CD14-positive monocyte (primary cell): ENCODE measurements at regions of chr1 and their contacts with region 1.

Region 1: GRCh38 chr1:31541194-31541593 is 35.1 kb upstream of the TINAGL1 start:
- DNase-seq: no peak
- H3K4me3 ChIP-seq: no peak overlapping the region
- H3K4me3 Mint-ChIP-seq: no peak overlapping the region
- H3K27ac ChIP-seq: no peak overlapping the region
- H3K27ac Mint-ChIP-seq: no peak overlapping the region
- H3K4me1 ChIP-seq: peaks cover 4 to 5% of the 10 kb centered on the region in 2 donors
- H3K4me1 Mint-ChIP-seq: peaks cover 8% of the 10 kb centered on the region
- H3K27me3 ChIP-seq: no peaks in the 10 kb centered on the region
- H3K27me3 Mint-ChIP-seq: peaks cover 0 to 3% (median 0%) of the 10 kb centered on the region in 3 donors
- CTCF ChIP-seq: no peak

Region 2: DNA sequence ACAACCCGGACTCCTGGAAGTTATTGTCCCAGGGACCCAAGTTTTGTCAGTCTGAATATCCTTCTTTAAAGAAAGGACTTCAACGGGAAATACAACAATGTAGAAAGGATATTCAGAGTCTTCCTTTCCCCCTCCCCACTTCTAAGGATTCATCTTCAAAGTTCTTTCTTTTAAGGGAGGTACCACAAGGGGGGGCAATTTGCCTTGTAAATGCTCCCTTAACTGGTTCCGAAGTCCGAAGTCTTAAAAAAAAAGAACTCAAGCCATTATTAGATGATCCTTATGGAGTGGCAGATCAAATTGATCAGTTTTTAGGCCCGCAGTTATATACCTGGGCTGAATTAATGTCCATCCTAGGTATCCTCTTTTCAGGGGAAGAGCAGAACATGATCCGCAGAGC is 81.2 kb before region 1 on chr1:
- intact Hi-C with region 1: loop called in 1 of 2 experiments (anchors 5 kb)
- DNase-seq: peak in 1 of 3 donors; percentile 20
- H3K4me3 ChIP-seq: no peak overlapping the region
- H3K4me3 Mint-ChIP-seq: no peak overlapping the region
- H3K27ac ChIP-seq: no peak overlapping the region
- H3K27ac Mint-ChIP-seq: no peak overlapping the region
- H3K4me1 ChIP-seq: no peaks in the 10 kb centered on the region
- H3K4me1 Mint-ChIP-seq: no peaks in the 10 kb centered on the region
- H3K27me3 ChIP-seq: no peaks in the 10 kb centered on the region
- H3K27me3 Mint-ChIP-seq: peaks cover 0 to 3% (median 0%) of the 10 kb centered on the region in 3 donors
- CTCF ChIP-seq: peak; percentile 20

Region 3: GRCh38 chr1:31505911-31506497 is 35.2 kb before region 1 on chr1:
- intact Hi-C with region 1: loop called (anchors 5 kb)
- DNase-seq: peak in 2 of 3 donors; percentile 54 to 58
- H3K4me3 ChIP-seq: no peak overlapping the region
- H3K4me3 Mint-ChIP-seq: no peak overlapping the region
- H3K27ac ChIP-seq: no peak overlapping the region
- H3K27ac Mint-ChIP-seq: peak overlapping the region in 3 of 7 donors; percentile 66 to 84 (median 77)
- H3K4me1 ChIP-seq: peaks cover 9 to 12% of the 10 kb centered on the region in 2 donors
- H3K4me1 Mint-ChIP-seq: peaks cover 28% of the 10 kb centered on the region
- H3K27me3 ChIP-seq: no peaks in the 10 kb centered on the region
- H3K27me3 Mint-ChIP-seq: peaks cover 10 to 12% (median 11%) of the 10 kb centered on the region in 3 donors
- CTCF ChIP-seq: no peak

Region 4: GRCh38 chr1:31551206-31551605 is 10.0 kb after region 1 on chr1:
- intact Hi-C with region 1: no loop called
- DNase-seq: no peak
- H3K4me3 ChIP-seq: no peak overlapping the region
- H3K4me3 Mint-ChIP-seq: no peak overlapping the region
- H3K27ac ChIP-seq: no peak overlapping the region
- H3K27ac Mint-ChIP-seq: no peak overlapping the region
- H3K4me1 ChIP-seq: peaks cover 14 to 20% of the 10 kb centered on the region in 2 donors
- H3K4me1 Mint-ChIP-seq: peaks cover 23% of the 10 kb centered on the region
- H3K27me3 ChIP-seq: no peaks in the 10 kb centered on the region
- H3K27me3 Mint-ChIP-seq: peaks cover 0 to 3% (median 0%) of the 10 kb centered on the region in 3 donors
- CTCF ChIP-seq: no peak

Region 5: DNA sequence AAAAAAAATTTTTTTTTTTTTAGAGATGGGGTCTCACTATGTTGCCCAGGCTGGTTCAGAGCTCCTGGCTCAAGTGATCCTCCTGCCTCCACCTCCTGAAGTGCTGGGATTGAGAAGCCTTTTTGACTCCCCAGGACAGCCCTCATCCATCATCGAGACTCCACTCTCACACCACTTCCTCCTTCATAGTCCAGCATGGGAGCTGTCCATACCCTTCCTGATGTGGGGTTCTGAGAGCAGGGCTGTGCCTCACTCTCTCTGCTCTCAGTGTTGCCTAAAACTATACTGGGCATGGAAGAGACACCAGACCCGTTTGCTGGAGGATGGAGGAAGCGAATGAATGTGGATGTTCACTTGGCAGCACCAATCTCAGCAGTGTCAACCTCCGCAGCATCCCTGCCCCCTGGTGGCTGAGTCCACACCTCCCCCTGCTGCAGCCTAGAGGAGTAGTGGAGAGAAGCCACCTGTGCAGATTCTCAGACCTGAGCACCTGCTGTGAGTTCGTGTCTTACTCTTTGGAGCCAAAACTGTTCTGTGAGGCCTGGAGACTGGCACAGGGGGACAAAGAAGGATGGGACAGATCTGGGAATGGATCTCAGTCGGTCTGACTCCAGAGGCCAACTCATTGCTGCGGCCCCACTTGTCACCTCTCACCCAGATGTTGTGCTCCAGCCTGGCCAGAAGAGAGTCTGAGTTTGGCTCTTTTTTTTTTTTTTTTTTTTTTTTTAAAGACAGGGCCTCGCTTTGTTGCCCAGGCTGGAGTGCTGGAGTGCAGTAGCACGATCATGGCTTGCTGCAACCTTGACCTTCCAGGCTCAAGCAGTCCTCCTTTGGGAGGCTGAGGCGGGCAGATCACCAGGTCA is 52.8 kb after region 1 on chr1:
- intact Hi-C with region 1: no loop called
- DNase-seq: peak; percentile 26 to 71 (median 59)
- H3K4me3 ChIP-seq: no peak overlapping the region
- H3K4me3 Mint-ChIP-seq: peak overlapping the region in 1 of 2 donors; percentile 22
- H3K27ac ChIP-seq: no peak overlapping the region
- H3K27ac Mint-ChIP-seq: peak overlapping the region in 2 of 7 donors; percentile 10 to 66
- H3K4me1 ChIP-seq: no peaks in the 10 kb centered on the region
- H3K4me1 Mint-ChIP-seq: peaks cover 20% of the 10 kb centered on the region
- H3K27me3 ChIP-seq: peaks cover 0 to 8% of the 10 kb centered on the region in 2 donors
- H3K27me3 Mint-ChIP-seq: peaks cover 8 to 33% (median 22%) of the 10 kb centered on the region in 3 donors
- CTCF ChIP-seq: peak; percentile 83

Region 6: GRCh38 chr1:31617917-31618660 is 76.9 kb after region 1 on chr1:
- intact Hi-C with region 1: no loop called
- DNase-seq: peak; percentile 25 to 52 (median 43)
- H3K4me3 ChIP-seq: peak overlapping the region in 1 of 3 experiments; percentile 63
- H3K4me3 Mint-ChIP-seq: peak overlapping the region in 1 of 2 donors; percentile 48
- H3K27ac ChIP-seq: no peak overlapping the region
- H3K27ac Mint-ChIP-seq: no peak overlapping the region
- H3K4me1 ChIP-seq: peaks cover 5 to 8% of the 10 kb centered on the region in 2 donors
- H3K4me1 Mint-ChIP-seq: peaks cover 2% of the 10 kb centered on the region
- H3K27me3 ChIP-seq: peaks cover 7 to 32% of the 10 kb centered on the region in 2 donors
- H3K27me3 Mint-ChIP-seq: peaks cover 22 to 37% (median 31%) of the 10 kb centered on the region in 3 donors
- CTCF ChIP-seq: peak; percentile 98